Activated CD4-positive, alpha-beta memory T cell treated with anti-CD3 and anti-CD28 coated beads, Interleukin-2, amount 10 ng/mL, durations not matched to agents 7 days and 5 days (primary cell): ENCODE measurements at regions of chr14 and their contacts with region 1.

Region 1: GRCh38 chr14:102063091-102063802 is 23.6 kb downstream of the HSP90AA1 start:
- DNase-seq: peak; percentile 75
- H3K4me3 Mint-ChIP-seq: no peak overlapping the region
- H3K27ac Mint-ChIP-seq: no peak overlapping the region
- H3K4me1 Mint-ChIP-seq: peaks cover 9% of the 10 kb centered on the region
- H3K27me3 Mint-ChIP-seq: peaks cover under 1% of the 10 kb centered on the region

Region 2: DNA sequence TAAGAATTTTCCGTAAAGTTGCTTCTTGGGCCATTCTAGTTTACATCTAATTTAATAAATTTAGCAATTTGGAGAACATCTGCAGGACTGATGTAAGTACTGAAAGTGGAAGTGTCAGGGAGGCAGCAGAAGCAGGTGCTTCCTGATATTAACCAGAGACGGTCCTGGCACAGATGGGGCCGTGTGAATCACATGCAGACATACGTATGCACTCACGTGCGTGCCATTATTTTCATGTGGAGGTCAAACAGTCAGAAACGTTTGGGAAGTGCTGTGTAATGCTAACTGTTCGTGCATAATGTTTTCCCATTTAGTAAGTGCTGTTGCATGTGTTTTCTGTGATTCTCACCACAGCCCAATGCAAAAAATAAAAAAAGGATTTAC is 186.7 kb before region 1 on chr14:
- CTCF ChIA-PET with region 1: no interaction called
- POLR2A ChIA-PET with region 1: no interaction called
- DNase-seq: peak; percentile 73
- H3K4me3 Mint-ChIP-seq: peak overlapping the region; percentile 44
- H3K27ac Mint-ChIP-seq: peak overlapping the region; percentile 61
- H3K4me1 Mint-ChIP-seq: peaks cover 69% of the 10 kb centered on the region
- H3K27me3 Mint-ChIP-seq: no peaks in the 10 kb centered on the region

Region 3: DNA sequence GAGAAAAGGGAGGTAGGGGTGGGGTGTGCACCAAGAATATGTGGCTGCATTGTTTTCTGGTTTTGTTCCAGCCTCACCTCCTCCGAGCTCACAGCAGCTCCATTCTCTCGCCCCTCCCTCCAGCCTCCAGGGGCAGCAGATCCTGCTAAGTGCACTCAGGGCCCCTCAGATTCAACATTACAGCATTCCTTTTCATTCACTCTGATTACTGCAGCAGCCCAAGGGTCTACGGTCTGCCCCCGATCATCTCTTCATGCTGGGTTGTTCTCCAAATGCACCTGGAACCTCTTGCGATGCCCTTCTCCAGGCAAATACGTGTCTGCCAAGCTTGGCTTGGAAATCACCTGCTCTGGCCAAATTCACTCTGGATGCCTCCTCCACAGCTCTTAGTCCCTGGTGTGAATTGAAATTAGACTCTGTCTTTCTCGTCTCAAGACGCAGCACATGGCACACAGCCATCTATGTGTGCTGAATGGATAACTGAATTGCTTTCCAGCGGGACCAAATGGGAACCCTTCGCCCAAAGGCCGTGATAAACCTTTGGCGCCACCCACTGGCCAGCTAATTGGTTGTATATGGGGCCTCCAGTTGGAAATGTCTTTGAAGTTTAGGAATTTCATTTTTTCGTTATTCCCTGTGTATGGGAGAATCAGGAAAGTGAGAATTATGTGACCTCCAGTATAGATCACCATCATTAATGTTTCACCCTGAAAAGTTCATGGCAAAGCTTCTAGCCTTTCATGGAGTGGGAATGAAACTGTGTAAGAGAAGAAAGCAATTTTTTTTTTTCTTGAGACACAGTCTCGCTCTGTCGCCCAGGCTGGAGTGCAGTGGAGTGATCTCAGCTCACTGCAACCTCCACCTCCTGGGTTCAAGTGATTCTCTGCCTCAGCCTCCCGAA is 33.2 kb after region 1 on chr14:
- CTCF ChIA-PET with region 1: interaction called, 33 read pairs
- POLR2A ChIA-PET with region 1: no interaction called
- DNase-seq: peak; percentile 73
- H3K4me3 Mint-ChIP-seq: no peak overlapping the region
- H3K27ac Mint-ChIP-seq: no peak overlapping the region
- H3K4me1 Mint-ChIP-seq: peaks cover 11% of the 10 kb centered on the region
- H3K27me3 Mint-ChIP-seq: no peaks in the 10 kb centered on the region

Region 4: DNA sequence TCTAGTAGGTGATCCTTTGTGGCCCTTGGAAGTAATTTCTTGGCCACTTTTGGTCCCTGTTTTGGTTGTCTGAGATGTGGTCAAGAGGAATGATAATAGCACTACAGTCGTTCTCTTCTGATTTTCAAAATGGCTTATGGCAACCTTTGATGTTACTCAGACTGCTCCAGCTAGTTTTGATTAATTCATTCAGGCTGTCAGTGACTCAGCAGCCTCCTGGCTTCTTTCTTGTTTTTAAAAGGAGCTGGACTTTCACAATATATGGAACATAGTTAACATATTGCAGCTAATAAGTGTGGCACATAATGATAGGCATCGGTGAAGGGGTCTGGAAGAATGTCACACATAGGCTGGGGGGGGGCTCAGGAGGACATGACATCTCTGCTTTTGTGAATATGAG is 123.8 kb after region 1 on chr14:
- CTCF ChIA-PET with region 1: no interaction called
- POLR2A ChIA-PET with region 1: no interaction called
- DNase-seq: no peak
- H3K4me3 Mint-ChIP-seq: no peak overlapping the region
- H3K27ac Mint-ChIP-seq: no peak overlapping the region
- H3K4me1 Mint-ChIP-seq: peaks cover 30% of the 10 kb centered on the region
- H3K27me3 Mint-ChIP-seq: no peaks in the 10 kb centered on the region